Astrocyte of the cerebellum (primary cell): ENCODE measurements at regions of chr16 and their contacts with region 1.

Region 1: DNA sequence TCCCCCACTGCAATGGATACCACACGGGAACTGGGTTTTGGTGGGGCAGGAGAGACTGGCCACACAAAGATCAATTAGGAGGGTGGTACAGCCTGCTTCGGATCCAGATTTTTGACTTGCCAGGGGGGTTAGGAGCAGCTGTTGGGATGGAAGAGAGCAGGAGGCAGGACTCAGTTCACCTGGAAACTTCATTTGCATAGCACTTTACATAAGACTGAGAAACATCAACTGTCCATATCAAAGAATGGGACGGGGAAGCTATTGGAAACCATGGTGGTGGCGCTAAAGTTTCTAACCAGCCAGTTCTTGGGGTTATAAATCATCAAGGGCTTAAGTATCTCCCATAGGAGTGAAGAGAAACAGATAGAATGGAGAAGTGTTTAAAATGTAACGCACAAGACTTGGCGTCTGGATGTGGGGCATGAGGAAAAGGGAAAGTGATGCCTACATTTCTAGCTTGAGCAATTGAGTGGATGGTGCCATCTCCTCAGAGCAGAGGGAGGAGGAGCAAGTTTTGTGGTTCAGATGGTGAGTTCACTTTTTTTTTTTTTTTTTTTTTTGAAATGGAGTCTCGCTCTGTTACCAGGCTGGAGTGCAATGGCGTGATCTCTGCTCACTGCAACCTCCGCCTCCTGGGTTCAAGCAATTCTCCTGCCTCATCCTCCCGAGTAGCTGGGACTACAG is 6.4 kb upstream of the SRCAP start:
- DNase-seq: no peak
- H3K4me3 ChIP-seq: no peak overlapping the region
- CTCF ChIP-seq: no peak

Region 2: GRCh38 chr16:30628627-30629540 is 63.6 kb before region 1 on chr16:
- in situ Hi-C with region 1: no loop called
- DNase-seq: peak; percentile 45
- H3K4me3 ChIP-seq: no peak overlapping the region
- CTCF ChIP-seq: peak; percentile 96

Region 3: GRCh38 chr16:30750863-30751465 is 58.4 kb after region 1 on chr16:
- in situ Hi-C with region 1: loop called (anchors 5 kb)
- DNase-seq: no peak
- H3K4me3 ChIP-seq: no peak overlapping the region
- CTCF ChIP-seq: no peak